Psoas muscle (tissue), 8 donors: ENCODE measurements at regions of chr17 and their contacts with region 1.

Region 1: GRCh38 chr17:32609085-32609484 is 122.3 kb downstream of the CDK5R1 start:
- DNase-seq: peak; percentile 56 to 75
- ATAC-seq: peak; percentile 73 to 90 (median 88)
- H3K4me3 ChIP-seq: no peak overlapping the region
- H3K27ac ChIP-seq: no peak overlapping the region
- H3K4me1 ChIP-seq: no peaks in the 10 kb centered on the region
- H3K27me3 ChIP-seq: no peaks in the 10 kb centered on the region
- CTCF ChIP-seq: peak; percentile 45

Region 2: GRCh38 chr17:32461853-32462617 is 147.1 kb before region 1 on chr17:
- intact Hi-C with region 1: loop called in 1 of 2 experiments (anchors 2 kb)
- DNase-seq: no peak
- ATAC-seq: peak; percentile 52 to 72 (median 68)
- H3K4me3 ChIP-seq: no peak overlapping the region
- H3K27ac ChIP-seq: no peak overlapping the region
- H3K4me1 ChIP-seq: peaks cover 9% of the 10 kb centered on the region
- H3K27me3 ChIP-seq: no peaks in the 10 kb centered on the region
- CTCF ChIP-seq: peak; percentile 56

Region 3: GRCh38 chr17:32495359-32496231 is 113.5 kb before region 1 on chr17:
- intact Hi-C with region 1: loop called in 1 of 2 experiments (anchors 5 kb)
- DNase-seq: peak; percentile 80 to 82
- ATAC-seq: peak; percentile 71 to 80 (median 73)
- H3K4me3 ChIP-seq: peak overlapping the region; percentile 50
- H3K27ac ChIP-seq: peak overlapping the region; percentile 98
- H3K4me1 ChIP-seq: peaks cover 34% of the 10 kb centered on the region
- H3K27me3 ChIP-seq: no peaks in the 10 kb centered on the region
- CTCF ChIP-seq: no peak

Region 4: DNA sequence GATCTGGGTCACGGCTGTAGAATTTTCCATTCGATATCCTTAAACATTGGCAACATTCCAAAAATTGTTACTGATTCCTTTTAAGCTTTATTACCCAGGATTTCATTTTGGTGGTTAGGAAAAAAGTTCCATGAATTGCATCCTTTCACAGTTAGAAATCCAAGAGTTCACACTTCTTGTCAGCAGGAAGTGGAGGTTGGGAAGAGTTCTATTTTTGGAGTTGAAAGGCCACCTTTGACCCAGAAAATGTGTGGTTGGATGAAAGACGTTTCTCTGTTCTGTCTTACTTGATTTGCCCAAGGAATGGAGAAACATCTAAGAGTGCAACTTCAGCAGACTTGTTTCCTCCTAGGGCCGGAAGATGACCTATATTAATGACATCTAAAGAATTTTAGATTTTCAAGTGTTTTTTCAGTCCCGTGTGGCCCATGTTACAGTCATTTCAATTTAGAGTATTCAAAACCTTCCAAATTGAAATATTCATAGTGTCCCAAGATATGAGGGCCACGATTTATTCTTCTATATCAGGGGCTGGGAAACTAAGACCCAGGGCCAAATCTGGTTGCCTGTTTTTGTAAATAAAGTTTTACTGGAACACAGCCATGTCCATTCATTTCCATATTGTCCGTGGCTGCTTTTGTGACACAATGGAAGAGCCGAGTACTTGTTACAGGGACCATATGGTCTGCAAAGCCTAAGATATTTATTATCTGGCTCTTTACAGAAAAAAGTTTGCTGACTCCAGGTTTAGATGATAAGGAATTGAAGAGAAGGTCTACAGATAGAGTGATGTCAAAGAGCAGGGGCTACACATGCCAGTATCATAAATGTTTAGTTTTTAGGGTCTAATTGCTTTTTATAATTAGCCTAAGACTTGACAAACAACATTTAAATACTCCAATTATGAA is 72.1 kb before region 1 on chr17:
- intact Hi-C with region 1: no loop called
- DNase-seq: no peak
- ATAC-seq: no peak
- H3K4me3 ChIP-seq: no peak overlapping the region
- H3K27ac ChIP-seq: no peak overlapping the region
- H3K4me1 ChIP-seq: peaks cover 4% of the 10 kb centered on the region
- H3K27me3 ChIP-seq: no peaks in the 10 kb centered on the region
- CTCF ChIP-seq: no peak

Region 5: DNA sequence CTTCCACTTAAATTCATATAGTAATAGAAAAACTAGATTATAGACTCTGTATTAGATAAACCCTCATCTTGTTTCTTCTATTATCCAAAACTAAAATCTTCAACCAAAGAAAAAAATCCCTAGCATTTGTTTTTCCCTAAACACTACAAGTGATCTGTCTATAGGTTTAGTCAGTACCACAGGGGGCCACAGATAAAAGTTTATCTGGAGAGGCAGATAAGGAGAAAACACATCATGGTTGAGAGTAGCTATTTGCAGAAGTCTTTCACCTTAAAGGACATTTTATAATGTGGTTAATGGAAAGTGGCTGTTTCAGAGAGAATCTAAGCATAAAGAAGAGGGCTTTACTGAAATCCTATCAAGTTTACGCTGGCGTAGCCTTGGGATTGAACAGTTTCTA is 37.9 kb after region 1 on chr17:
- intact Hi-C with region 1: no loop called
- DNase-seq: no peak
- ATAC-seq: no peak
- H3K4me3 ChIP-seq: no peak overlapping the region
- H3K27ac ChIP-seq: no peak overlapping the region
- H3K4me1 ChIP-seq: no peaks in the 10 kb centered on the region
- H3K27me3 ChIP-seq: no peaks in the 10 kb centered on the region
- CTCF ChIP-seq: no peak